Mammary epithelial cell (primary cell): ENCODE measurements at regions of chr5 and their contacts with region 1.

Region 1: GRCh38 chr5:42656651-42657015 is 100.0 kb upstream of the CCDC152 start:
- DNase-seq: peak; percentile 4
- H3K4me3 ChIP-seq: peak overlapping the region; percentile 2 to 64 (median 45)
- H3K27ac ChIP-seq: peak overlapping the region; percentile 53
- H3K4me1 ChIP-seq: peaks cover 10% of the 10 kb centered on the region
- H3K27me3 ChIP-seq: no peaks in the 10 kb centered on the region
- CTCF ChIP-seq: peak; percentile 19 to 48

Region 2: DNA sequence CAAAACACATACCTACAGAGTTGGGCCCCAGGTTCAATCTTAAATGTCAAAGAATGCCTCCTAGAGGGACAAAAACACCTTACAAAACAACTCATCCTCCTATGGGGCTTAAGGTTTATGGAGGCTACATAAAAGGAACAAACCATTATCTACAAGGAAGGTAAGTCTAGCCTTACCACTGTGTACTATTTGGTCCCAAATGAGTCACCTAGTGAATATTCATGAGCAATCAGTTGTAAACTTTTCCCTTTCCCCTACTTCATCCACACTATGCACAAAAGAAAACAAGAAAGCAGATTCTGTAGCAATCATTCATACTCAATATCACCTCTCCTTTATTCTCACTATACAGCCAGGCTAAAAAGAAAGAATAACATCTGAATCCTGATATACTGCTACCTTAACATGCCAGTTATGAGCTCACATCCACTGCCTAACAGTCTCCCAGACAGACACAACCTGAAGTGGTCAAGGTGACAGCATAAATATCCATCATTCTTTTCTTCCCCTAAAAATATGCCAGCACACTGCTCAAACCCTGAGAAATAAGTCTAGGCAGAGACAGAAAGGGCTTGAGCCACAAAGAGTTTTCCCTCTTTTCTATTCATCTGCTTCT is 792.7 kb before region 1 on chr5:
- CTCF ChIA-PET with region 1: no interaction called
- dilution Hi-C with region 1: no loop called
- in situ Hi-C with region 1: no loop called
- intact Hi-C with region 1: loop called (anchors 1 kb)
- DNase-seq: peak; percentile 15
- H3K4me3 ChIP-seq: no peak overlapping the region
- H3K27ac ChIP-seq: no peak overlapping the region
- H3K4me1 ChIP-seq: peaks cover 10% of the 10 kb centered on the region
- H3K27me3 ChIP-seq: no peaks in the 10 kb centered on the region
- CTCF ChIP-seq: no peak

Region 3: DNA sequence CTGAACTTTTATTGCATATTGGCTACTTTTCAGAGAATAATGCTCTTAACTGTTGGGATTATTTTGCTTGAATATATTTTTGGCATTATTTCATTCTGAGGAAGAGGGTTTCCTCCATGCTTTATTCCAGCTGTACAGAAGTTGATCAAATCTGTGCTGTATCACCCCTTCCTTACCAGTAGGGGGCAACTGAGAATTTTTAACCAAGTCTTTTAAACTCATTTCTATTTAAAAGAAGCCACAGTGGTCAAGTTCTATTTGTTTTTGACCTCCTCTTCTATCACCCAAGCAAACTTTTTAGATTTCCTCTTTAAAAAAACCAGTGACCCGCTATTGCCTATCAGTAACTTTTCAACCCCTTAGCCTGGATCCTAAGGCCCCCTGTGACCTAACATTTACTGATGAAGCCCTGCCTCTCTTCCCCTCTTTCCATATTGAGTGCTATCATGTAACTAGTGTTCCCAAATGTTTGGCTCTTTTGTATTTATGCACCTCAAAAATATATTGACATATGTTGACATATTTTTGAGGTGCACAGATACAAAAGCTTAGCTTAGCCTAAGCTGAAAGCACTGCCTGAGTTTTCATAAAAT is 651.0 kb before region 1 on chr5:
- CTCF ChIA-PET with region 1: no interaction called
- dilution Hi-C with region 1: no loop called
- in situ Hi-C with region 1: no loop called
- intact Hi-C with region 1: loop called (anchors 2 kb)
- DNase-seq: peak; percentile 8
- H3K4me3 ChIP-seq: no peak overlapping the region
- H3K27ac ChIP-seq: no peak overlapping the region
- H3K4me1 ChIP-seq: no peaks in the 10 kb centered on the region
- H3K27me3 ChIP-seq: no peaks in the 10 kb centered on the region
- CTCF ChIP-seq: peak; percentile 70 to 75

Region 4: DNA sequence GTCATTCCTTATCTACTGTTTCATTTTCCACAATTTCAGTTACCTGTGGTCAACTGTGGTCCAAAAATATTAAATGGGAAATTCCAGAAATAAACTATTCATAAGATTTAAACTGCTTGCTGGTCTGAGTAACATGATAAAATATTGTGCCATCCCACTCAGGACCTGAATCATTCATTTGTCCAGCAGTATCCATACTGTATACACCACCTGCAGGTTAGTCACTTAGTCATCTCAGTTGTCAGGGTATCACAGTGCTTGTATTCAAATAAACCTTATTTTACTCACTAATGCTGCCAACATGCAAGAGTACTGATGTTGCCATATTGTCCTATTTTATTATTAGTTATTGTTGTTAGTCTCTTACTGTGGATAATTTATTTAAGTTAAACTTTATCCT is 591.8 kb before region 1 on chr5:
- CTCF ChIA-PET with region 1: no interaction called
- dilution Hi-C with region 1: no loop called
- in situ Hi-C with region 1: no loop called
- intact Hi-C with region 1: loop called (anchors 10 kb)
- DNase-seq: peak; percentile 96
- H3K4me3 ChIP-seq: no peak overlapping the region
- H3K27ac ChIP-seq: peak overlapping the region; percentile 62
- H3K4me1 ChIP-seq: peaks cover 7% of the 10 kb centered on the region
- H3K27me3 ChIP-seq: no peaks in the 10 kb centered on the region
- CTCF ChIP-seq: no peak

Region 5: DNA sequence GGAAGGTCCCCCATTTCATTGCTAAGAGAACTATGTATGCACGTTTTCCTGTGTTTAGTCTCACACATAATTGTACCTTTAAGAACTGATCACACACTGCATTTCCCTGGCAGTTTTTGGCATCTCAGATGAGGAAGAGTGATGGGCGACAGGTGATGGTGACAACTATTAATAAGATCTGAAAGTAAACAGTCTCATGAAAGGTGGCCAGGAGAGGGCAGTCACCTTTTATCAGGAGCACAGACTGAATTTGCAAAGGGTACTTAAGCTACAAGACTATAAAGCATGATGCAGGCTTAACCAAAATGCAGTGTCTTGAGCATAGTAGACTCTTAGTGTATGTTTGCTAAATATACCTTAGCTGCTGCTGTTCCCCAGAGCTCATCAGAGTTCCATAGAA is 141.9 kb before region 1 on chr5:
- CTCF ChIA-PET with region 1: interaction called, 3 read pairs
- dilution Hi-C with region 1: no loop called
- in situ Hi-C with region 1: loop called in 1 of 2 experiments (anchors 10 kb)
- intact Hi-C with region 1: loop called (anchors 1 kb)
- DNase-seq: peak; percentile 7
- H3K4me3 ChIP-seq: no peak overlapping the region
- H3K27ac ChIP-seq: no peak overlapping the region
- H3K4me1 ChIP-seq: no peaks in the 10 kb centered on the region
- H3K27me3 ChIP-seq: no peaks in the 10 kb centered on the region
- CTCF ChIP-seq: peak; percentile 30 to 56

Region 6: GRCh38 chr5:42715785-42716184 is 59.2 kb after region 1 on chr5:
- CTCF ChIA-PET with region 1: no interaction called
- dilution Hi-C with region 1: no loop called
- in situ Hi-C with region 1: no loop called
- intact Hi-C with region 1: no loop called
- DNase-seq: no peak
- H3K4me3 ChIP-seq: no peak overlapping the region
- H3K27ac ChIP-seq: no peak overlapping the region
- H3K4me1 ChIP-seq: peaks cover 11% of the 10 kb centered on the region
- H3K27me3 ChIP-seq: no peaks in the 10 kb centered on the region
- CTCF ChIP-seq: no peak